Mammary epithelial cell (primary cell): ENCODE measurements at regions of chr1 and their contacts with region 1.

Region 1: DNA sequence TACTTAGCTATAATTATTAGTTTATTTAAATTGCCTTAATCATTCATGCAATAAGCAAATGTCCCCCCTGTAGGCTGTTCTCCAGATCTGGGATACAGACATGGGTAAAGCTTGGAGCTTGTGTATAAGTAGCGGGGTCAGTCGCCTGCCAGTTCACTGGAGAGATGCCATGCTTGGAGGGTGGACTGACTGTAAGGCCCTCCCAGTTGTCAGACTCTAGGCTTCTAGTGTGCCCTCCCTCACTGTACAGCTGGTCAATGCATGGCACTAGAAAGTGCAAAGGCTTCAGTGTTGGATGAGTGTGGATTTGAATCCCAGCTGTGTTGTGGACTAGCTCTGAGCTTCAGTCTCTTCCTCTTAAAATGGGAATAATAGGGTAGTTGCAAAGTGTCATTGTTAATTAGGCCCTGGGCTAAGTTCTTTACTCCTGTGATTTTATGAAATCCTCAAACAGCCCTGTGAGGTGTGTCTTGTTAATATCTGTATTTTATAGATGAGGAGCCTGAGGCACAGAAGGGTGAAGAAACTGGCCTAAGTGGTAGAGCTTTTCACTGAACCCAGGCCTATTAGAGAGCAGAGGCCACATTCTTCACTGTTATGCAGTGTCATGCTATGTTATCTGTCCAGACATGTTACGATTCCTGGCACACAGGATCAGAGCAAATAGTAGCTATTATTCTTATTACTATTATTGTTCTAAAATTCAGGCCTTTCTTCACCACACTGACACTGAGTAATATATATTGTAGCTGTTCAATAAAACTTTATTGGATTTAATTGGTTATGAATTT is 85.9 kb downstream of the ROR1 start:
- DNase-seq: peak; percentile 73
- H3K4me3 ChIP-seq: no peak overlapping the region
- H3K27ac ChIP-seq: peak overlapping the region; percentile 57
- H3K4me1 ChIP-seq: peaks cover 28% of the 10 kb centered on the region
- H3K27me3 ChIP-seq: no peaks in the 10 kb centered on the region
- CTCF ChIP-seq: no peak

Region 2: DNA sequence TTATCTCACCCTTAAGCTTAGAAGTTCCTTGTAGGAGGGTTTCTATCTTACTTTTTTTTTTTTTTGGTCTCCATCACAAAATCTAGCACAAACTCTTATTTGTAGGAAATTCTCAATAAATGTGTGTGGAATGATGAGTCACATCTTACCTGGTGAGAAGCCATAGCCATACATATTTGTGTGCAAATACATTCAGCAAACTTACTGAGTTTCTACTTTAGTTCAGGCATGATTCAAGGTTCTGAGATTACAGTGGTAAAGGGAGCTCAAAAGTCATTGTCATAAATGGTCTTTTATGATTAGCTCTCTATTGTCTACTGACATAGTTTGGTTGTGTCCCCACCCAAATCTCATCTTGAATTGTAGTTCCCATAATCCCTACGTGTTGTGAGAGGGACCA is 150.6 kb after region 1 on chr1:
- CTCF ChIA-PET with region 1: interaction called, 10 read pairs
- dilution Hi-C with region 1: no loop called
- in situ Hi-C with region 1: no loop called
- intact Hi-C with region 1: no loop called
- DNase-seq: peak; percentile 59
- H3K4me3 ChIP-seq: no peak overlapping the region
- H3K27ac ChIP-seq: no peak overlapping the region
- H3K4me1 ChIP-seq: peaks cover 35% of the 10 kb centered on the region
- H3K27me3 ChIP-seq: no peaks in the 10 kb centered on the region
- CTCF ChIP-seq: no peak

Region 3: DNA sequence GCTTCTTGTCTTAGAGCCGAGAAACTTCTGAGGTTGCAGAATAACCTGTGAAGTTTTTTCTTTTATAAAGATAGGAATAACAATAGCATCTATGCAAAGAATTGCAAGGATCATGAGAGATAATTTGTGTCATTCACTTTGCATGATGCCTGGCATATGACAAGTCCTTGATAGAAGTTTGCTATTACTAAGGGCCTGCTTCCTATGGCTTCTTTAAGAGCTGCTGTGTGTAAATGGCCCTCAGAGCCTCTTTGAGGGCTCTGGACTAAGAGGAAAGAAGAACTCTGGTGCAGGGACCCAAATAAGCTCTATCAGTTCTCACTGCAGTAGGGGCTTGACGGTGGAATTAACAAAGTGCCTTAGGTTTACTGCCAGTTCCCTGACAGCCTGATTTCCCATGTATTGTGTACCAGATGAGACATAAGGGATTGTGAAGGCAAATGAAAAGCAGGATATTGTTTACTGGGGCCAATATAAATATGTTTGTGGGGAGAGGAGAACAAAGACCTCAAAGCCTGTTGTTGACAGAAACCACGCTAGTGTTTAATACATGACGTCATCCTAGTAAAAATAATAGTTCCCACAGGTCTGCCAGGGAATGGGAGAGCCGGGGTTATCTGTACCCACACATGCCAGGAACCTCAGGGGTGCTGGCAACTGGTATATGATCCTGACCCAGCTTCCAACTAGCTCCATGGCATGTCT is 212.6 kb after region 1 on chr1:
- CTCF ChIA-PET with region 1: no interaction called
- dilution Hi-C with region 1: no loop called
- in situ Hi-C with region 1: no loop called
- intact Hi-C with region 1: no loop called
- DNase-seq: peak; percentile 86
- H3K4me3 ChIP-seq: no peak overlapping the region
- H3K27ac ChIP-seq: peak overlapping the region; percentile 42
- H3K4me1 ChIP-seq: peaks cover 47% of the 10 kb centered on the region
- H3K27me3 ChIP-seq: no peaks in the 10 kb centered on the region
- CTCF ChIP-seq: no peak